ENCODE measurements at regions of chr11 and their contacts with region 1.

Region 1: DNA sequence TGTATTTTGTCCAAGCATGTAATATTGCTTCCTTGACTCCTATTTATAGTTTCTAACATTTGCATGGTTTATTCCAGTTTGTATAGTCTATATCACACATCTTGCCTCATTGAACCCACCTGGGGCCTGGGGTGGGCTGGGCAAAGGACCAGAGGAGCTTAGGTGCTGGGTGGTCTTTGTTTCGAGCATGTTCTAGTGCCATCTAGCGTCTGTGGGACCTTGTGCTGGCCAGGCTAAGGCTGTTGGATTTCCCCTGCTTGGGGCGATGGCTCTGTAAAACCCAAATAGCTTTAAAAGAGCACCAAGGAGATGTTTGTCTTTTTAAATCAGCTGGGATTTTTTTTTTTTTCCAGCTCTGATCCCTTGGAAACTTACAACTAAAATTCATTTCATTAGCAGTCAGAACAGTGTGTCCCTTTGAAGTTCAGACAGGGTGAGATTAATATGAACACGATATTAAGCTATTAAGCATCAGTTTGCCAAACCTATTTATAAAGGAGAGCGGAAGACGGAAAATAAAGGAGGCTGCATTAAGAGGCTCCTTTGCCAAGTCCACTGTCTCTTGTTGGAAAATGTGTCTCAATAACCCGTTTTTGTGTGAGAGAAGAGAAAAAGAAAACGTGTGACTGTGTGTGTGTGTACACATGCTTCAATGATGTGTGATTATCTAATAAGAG is 157.4 kb downstream of the COMMD9 start:
- DNase-seq: peak; percentile 67
- ATAC-seq: peak; percentile 96
- H3K4me3 Mint-ChIP-seq: no peak overlapping the region
- H3K27ac Mint-ChIP-seq: 0 out of 2 replicates have a peak overlapping the region, but pooled peaks have one; percentile 23
- H3K4me1 Mint-ChIP-seq: peaks cover 49% of the 10 kb centered on the region
- H3K27me3 Mint-ChIP-seq: no peaks in the 10 kb centered on the region
- CTCF ChIP-seq: peak; percentile 35; the same call in 1 of the 2 replicates

Region 2: GRCh38 chr11:35617687-35618496 is 514.0 kb before region 1 on chr11 and contains the start of gene FJX1:
- CTCF ChIA-PET with region 1: interaction called, 16 read pairs
- POLR2A ChIA-PET with region 1: no interaction called
- DNase-seq: peak; percentile 76
- ATAC-seq: peak; percentile 54
- H3K4me3 Mint-ChIP-seq: peak within 1 kb of the TSS; percentile 76
- H3K27ac Mint-ChIP-seq: peak within 1 kb of the TSS; percentile 60; the same call in 1 of the 2 replicates
- H3K4me1 Mint-ChIP-seq: peaks cover 47% of the 10 kb centered on the region
- H3K27me3 Mint-ChIP-seq: peaks cover 44% of the 10 kb centered on the region
- CTCF ChIP-seq: no peak
- total RNA-seq, gene FJX1: 8.3 to 12.0 TPM (median 11.0 TPM) in 3 replicates

Region 3: DNA sequence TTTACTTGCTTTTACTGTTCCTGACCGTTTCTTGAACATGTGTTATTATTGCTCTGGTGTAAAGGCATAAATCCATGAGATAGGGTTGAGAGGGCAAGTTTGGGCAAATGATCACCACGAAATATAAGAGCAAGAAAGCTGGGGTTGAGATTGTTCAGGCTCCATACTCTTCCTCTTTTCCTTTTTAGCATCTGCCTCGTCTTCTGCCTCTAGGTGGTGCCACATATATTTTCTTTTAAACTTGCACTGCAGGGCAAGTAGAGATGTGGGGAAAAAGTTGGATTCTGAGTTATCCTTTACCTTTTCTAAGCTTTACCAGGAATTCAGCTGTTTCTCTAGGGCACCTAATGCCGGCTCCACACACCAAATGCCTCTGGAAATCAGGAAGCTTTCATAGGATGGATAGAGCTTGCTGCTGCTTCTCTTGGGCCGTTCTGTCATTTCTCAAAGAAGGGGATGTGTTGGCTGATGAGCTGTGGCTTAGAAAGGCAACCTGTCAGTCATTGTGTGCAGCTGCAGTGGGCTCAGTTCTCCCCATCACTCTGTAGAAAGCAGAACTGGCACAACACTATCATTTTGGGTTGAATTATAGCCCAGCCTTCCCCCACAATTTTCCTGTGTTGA is 89.8 kb before region 1 on chr11:
- CTCF ChIA-PET with region 1: interaction called, 46 read pairs
- POLR2A ChIA-PET with region 1: no interaction called
- DNase-seq: no peak
- ATAC-seq: peak; percentile 70; the same call in 1 of the 2 replicates
- H3K4me3 Mint-ChIP-seq: no peak overlapping the region
- H3K27ac Mint-ChIP-seq: peak overlapping the region; percentile 91
- H3K4me1 Mint-ChIP-seq: peaks cover 14% of the 10 kb centered on the region
- H3K27me3 Mint-ChIP-seq: no peaks in the 10 kb centered on the region
- CTCF ChIP-seq: no peak

Region 4: DNA sequence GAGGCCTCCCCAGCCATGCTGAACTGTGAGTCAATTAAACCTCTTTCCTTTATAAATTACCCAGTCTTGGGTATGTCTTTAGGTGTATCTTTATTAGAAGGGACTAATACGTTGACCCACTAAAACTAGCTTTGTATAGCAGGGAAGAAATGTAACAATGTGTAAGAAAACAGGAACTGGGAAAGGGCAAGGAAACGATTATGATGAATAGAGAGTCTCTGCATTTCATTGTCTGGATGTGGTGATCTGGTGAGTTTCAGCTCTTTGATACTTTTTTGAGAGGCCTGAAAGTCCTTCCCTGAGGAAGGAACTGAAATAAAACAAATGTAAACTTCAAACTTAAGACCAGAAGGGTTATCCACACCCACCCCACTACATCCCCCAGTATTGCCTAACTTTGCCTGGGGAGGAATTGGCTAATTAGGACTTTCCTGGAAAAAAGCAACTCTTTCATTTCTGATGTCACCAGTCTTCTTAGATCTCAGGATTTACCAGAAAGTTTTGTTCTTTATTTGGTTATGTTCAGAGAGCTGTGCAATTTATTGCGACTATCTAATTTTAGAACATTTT is 69.0 kb before region 1 on chr11:
- CTCF ChIA-PET with region 1: interaction called, 51 read pairs
- POLR2A ChIA-PET with region 1: no interaction called
- DNase-seq: no peak
- ATAC-seq: no peak
- H3K4me3 Mint-ChIP-seq: no peak overlapping the region
- H3K27ac Mint-ChIP-seq: peak overlapping the region; percentile 47; the same call in 1 of the 2 replicates
- H3K4me1 Mint-ChIP-seq: peaks cover 15% of the 10 kb centered on the region
- H3K27me3 Mint-ChIP-seq: no peaks in the 10 kb centered on the region
- CTCF ChIP-seq: no peak

Region 5: GRCh38 chr11:36091256-36091811 is 40.5 kb before region 1 on chr11:
- CTCF ChIA-PET with region 1: interaction called, 13 read pairs
- POLR2A ChIA-PET with region 1: no interaction called
- DNase-seq: no peak
- ATAC-seq: no peak
- H3K4me3 Mint-ChIP-seq: no peak overlapping the region
- H3K27ac Mint-ChIP-seq: peak overlapping the region; percentile 90
- H3K4me1 Mint-ChIP-seq: peaks cover 65% of the 10 kb centered on the region
- H3K27me3 Mint-ChIP-seq: no peaks in the 10 kb centered on the region; the same call in 1 of the 2 replicates
- CTCF ChIP-seq: no peak

Region 6: GRCh38 chr11:36109850-36110606 is 21.8 kb before region 1 on chr11:
- CTCF ChIA-PET with region 1: interaction called, 33 read pairs
- POLR2A ChIA-PET with region 1: interaction called, 5 read pairs
- DNase-seq: peak; percentile 47
- ATAC-seq: peak; percentile 77
- H3K4me3 Mint-ChIP-seq: peak overlapping the region; percentile 40
- H3K27ac Mint-ChIP-seq: peak overlapping the region; percentile 99
- H3K4me1 Mint-ChIP-seq: peaks cover 60% of the 10 kb centered on the region
- H3K27me3 Mint-ChIP-seq: no peaks in the 10 kb centered on the region; the same call in 1 of the 2 replicates
- CTCF ChIP-seq: no peak

Region 7: DNA sequence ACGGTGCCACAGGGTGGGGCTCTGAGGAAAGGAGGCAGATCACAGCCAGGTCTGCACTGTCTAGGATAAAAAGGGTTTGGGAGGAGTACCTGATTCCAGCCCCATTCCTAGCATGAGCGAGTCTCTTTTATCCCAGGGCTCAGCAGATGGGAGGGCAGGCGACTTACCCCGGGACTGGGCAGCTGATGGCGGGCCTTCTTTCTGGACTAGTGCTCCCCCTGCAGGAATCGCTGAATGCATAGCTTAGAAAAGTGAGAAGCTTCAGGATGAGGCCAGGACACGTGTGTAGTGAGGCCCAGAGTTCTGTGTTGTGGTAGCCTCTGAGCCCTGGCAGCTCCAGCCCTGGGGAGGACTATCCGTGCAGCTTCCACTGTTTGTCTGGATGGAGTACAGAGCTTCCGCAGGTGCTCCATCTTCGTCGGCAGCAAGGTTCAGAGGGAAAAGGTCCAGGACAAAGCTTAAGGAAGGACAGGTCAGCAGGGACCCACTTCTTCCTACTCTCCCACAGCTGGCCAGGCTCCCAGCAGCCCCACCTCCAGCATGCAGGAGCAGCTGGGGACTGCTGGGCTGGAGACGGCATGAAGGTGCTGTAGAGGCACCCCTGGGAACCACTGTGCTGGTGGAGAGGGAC is 127.0 kb after region 1 on chr11:
- CTCF ChIA-PET with region 1: interaction called, 16 read pairs
- POLR2A ChIA-PET with region 1: no interaction called
- DNase-seq: peak; percentile 74
- ATAC-seq: peak; percentile 93
- H3K4me3 Mint-ChIP-seq: no peak overlapping the region
- H3K27ac Mint-ChIP-seq: no peak overlapping the region
- H3K4me1 Mint-ChIP-seq: peaks cover 5% of the 10 kb centered on the region; the same call in 1 of the 2 replicates
- H3K27me3 Mint-ChIP-seq: peaks cover 12% of the 10 kb centered on the region
- CTCF ChIP-seq: 0 out of 2 replicates have a peak, but pooled peaks have one; percentile 20